BJ (cell line): ENCODE measurements at regions of chr2 and their contacts with region 1.

Region 1: GRCh38 chr2:25700221-25700660 is 26.9 kb upstream of the DTNB start:
- DNase-seq: peak; percentile 19
- H3K4me3 ChIP-seq: no peak overlapping the region
- H3K27me3 ChIP-seq: peaks cover 5% of the 10 kb centered on the region; the same call in 1 of the 2 replicates
- CTCF ChIP-seq: peak; percentile 80

Region 2: DNA sequence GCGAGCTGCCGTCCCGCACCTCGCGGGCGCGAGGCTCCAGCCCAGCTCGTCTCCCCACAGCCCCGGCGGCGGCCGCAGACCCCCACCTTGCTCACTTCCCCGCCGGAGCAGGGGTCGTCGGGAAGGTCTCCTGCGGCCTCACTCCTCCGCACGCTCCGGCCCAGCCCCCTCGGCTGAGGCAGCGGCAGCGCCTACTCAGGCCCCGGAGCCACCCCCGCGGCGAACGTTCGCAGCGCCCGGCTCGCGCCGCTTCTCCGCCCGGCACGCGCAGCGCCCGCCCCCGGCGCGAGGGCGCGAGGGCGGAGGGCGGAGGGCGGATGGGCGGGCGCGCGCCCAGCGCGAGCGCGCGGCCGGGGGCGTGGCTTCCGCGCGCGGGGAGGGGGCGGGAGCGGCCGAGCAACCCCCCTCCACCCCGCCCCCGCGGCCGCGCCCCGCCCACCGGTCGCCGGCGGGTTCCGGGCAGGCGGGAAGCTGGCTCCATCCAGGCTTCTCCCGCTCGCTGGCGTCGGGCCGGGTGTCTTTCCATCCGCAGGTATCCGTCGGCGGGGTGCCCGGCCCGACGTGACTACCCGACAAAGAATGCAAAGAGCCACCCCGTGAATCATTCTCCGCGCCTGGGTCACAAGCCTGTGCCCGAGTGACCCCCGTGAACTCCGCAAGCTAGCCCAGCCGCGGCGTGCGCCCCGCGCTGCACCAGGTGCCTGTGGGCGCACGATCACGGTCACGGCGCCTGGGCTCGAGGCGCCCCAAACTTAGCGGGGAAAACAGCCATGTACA is 26.8 kb before region 1 on chr2 and contains the start of gene DTNB:
- CTCF ChIA-PET with region 1: interaction called, 23 read pairs
- POLR2A ChIA-PET with region 1: no interaction called
- DNase-seq: no peak
- H3K4me3 ChIP-seq: peak within 1 kb of the TSS; percentile 55
- H3K27me3 ChIP-seq: no peaks in the 10 kb centered on the region
- CTCF ChIP-seq: no peak
- polyA plus RNA-seq, gene DTNB: 7.7 and 9.2 TPM in 2 replicates

Region 3: GRCh38 chr2:25690058-25690457 is 10.2 kb before region 1 on chr2:
- CTCF ChIA-PET with region 1: interaction called, 29 read pairs
- POLR2A ChIA-PET with region 1: no interaction called
- DNase-seq: no peak
- H3K4me3 ChIP-seq: no peak overlapping the region
- H3K27me3 ChIP-seq: peaks cover 2% of the 10 kb centered on the region; the same call in 1 of the 2 replicates
- CTCF ChIP-seq: no peak

Region 4: GRCh38 chr2:25722224-25722623 is 22.0 kb after region 1 on chr2:
- CTCF ChIA-PET with region 1: interaction called, 10 read pairs
- POLR2A ChIA-PET with region 1: no interaction called
- DNase-seq: no peak
- H3K4me3 ChIP-seq: no peak overlapping the region
- H3K27me3 ChIP-seq: peaks cover 2% of the 10 kb centered on the region
- CTCF ChIP-seq: no peak

Region 5: GRCh38 chr2:26122630-26123029 is 422.4 kb after region 1 on chr2:
- CTCF ChIA-PET with region 1: no interaction called
- POLR2A ChIA-PET with region 1: no interaction called
- DNase-seq: no peak
- H3K4me3 ChIP-seq: no peak overlapping the region
- H3K27me3 ChIP-seq: no peaks in the 10 kb centered on the region
- CTCF ChIP-seq: no peak